ENCODE measurements at regions of chr5 and their contacts with region 1.

Region 1: DNA sequence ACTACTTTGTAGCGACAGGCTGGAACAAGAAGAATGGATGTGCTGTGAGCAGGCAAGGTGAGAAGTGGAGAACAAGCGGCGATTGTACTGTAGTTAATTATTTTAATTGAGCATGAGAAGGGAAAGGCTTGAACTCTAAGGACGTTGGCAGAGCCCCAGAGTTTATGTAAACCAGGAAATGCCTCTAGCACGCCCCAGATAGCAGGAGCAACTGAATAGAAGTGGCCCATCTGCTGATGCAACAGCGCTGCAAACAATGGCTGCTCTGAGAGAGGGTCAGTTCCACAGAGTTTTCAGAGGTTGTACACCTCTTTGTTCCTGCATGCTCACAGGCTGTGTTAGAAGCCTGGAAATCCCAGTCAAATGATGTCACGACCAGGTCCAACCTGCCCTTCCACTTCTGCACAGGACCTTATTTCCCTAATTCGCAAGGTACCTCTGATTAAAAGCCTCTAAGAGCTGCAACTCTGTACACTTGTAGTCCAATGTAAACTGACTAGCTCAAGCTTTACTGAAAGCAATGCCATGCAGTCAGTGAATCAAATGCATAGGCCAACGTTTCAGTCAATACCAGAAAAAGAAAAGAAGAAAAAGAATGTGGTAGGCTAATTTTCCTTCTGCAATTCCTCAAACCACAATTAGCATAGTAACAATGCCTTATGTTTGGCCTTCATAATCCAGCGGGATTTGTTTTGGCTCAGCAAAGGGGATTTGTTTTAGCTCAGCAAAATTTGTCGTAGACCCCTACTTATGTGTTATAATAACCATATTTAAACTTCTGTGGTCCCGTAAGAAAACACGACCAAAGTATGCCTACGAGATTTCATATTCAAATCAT is 119.6 kb upstream of the RETREG1 start:
- DNase-seq: peak; percentile 72 to 81
- H3K4me3 ChIP-seq: no peak overlapping the region
- H3K4me3 Mint-ChIP-seq: peak overlapping the region; percentile 12
- H3K27ac Mint-ChIP-seq: peak overlapping the region; percentile 91
- H3K4me1 ChIP-seq: peaks cover 20% of the 10 kb centered on the region
- H3K4me1 Mint-ChIP-seq: peaks cover 31% of the 10 kb centered on the region
- H3K27me3 ChIP-seq: no peaks in the 10 kb centered on the region
- H3K27me3 Mint-ChIP-seq: no peaks in the 10 kb centered on the region
- CTCF ChIP-seq: no peak

Region 2: GRCh38 chr5:16721151-16722096 is 15.0 kb before region 1 on chr5:
- CTCF ChIA-PET with region 1: no interaction called
- POLR2A ChIA-PET with region 1: no interaction called
- intact Hi-C with region 1: loop called (anchors 1 kb)
- DNase-seq: peak; percentile 69 to 73
- H3K4me3 ChIP-seq: no peak overlapping the region
- H3K4me3 Mint-ChIP-seq: peak overlapping the region; percentile 37
- H3K27ac Mint-ChIP-seq: peak overlapping the region; percentile 92
- H3K4me1 ChIP-seq: peaks cover 36% of the 10 kb centered on the region
- H3K4me1 Mint-ChIP-seq: peaks cover 20% of the 10 kb centered on the region
- H3K27me3 ChIP-seq: no peaks in the 10 kb centered on the region; the same call in 1 of the 2 replicates
- H3K27me3 Mint-ChIP-seq: no peaks in the 10 kb centered on the region
- CTCF ChIP-seq: no peak

Region 3: DNA sequence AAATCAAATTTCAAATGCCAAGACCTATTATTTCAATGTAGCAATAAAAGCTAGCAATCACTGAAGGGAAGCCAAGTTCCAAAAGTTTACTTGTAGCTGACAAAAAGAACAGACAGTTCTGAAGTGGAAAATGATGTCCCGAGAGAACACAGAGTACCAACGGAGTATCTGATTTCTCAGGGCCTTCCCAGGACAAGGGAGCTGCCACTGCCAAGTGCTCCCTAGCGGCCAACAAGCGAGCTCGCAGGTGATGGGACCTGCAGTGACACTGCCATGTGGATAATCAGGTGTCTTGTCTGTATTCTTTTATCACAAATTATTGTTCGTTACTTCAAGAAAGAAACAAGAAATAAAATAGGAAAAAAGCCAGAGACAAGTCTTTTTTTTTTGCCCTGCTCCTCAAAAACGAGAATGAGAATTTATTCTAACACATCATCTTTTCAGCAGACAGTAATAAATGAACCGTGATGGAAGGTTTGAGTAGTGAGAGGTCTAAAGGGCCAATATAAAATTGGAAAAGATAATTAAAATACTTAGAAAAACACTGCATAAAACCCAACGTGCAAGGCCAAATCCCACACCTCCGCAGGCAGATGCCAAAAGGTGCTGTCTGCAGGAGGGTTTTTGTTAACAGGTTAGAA is 40.4 kb after region 1 on chr5:
- CTCF ChIA-PET with region 1: no interaction called
- POLR2A ChIA-PET with region 1: no interaction called
- intact Hi-C with region 1: no loop called
- DNase-seq: peak in 1 of 2 experiments; percentile 13
- H3K4me3 ChIP-seq: no peak overlapping the region
- H3K4me3 Mint-ChIP-seq: no peak overlapping the region
- H3K27ac Mint-ChIP-seq: no peak overlapping the region
- H3K4me1 ChIP-seq: no peaks in the 10 kb centered on the region
- H3K4me1 Mint-ChIP-seq: no peaks in the 10 kb centered on the region
- H3K27me3 ChIP-seq: no peaks in the 10 kb centered on the region
- H3K27me3 Mint-ChIP-seq: no peaks in the 10 kb centered on the region
- CTCF ChIP-seq: peak in 1 of 2 experiments; percentile 26